Activated CD4-positive, alpha-beta T cell treated with anti-CD3 and anti-CD28 coated beads, Interleukin-2, amount 10 ng/mL, durations not matched to agents 7 days and 5 days (primary cell): ENCODE measurements at regions of chr9 and their contacts with region 1.

Region 1: DNA sequence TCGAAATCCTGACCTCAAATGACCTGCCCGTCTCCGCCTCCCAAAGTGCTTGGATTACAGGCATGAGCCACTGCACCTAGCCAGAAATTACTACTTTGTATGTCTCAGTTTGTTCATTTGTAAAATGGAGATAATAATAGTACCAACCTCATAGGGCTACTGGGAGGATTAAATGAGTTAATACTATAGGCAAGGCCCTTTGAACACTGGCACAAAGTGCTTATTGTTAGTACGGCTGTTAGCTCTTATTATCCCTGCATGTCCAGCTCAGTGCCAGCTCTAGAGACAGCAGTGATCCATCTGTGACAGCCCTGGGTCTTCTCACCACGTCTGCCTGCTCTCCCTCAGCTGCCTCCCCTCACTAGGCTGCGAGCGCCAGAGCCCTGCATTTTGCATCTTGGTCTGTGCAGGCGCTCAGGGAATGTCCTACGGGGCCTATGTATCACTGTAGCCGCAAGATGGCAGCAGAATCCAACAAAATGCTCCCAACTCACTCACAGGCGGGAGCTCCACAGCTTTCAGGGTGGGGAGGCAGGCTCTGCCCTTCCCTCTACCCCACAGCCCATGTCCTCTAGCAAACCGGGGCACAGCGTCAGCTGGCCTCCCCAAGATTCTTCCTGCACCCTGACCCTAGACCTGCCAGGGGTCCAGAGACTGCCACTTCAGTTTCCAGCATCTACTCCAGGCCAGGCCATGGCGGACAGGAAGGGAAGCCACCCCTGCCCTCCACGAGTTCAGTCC is 17.7 kb upstream of the AKNA start:
- DNase-seq: peak; percentile 87
- H3K4me3 Mint-ChIP-seq: no peak overlapping the region
- H3K27ac Mint-ChIP-seq: peak overlapping the region; percentile 70
- H3K4me1 Mint-ChIP-seq: peaks cover 17% of the 10 kb centered on the region
- H3K27me3 Mint-ChIP-seq: no peaks in the 10 kb centered on the region

Region 2: DNA sequence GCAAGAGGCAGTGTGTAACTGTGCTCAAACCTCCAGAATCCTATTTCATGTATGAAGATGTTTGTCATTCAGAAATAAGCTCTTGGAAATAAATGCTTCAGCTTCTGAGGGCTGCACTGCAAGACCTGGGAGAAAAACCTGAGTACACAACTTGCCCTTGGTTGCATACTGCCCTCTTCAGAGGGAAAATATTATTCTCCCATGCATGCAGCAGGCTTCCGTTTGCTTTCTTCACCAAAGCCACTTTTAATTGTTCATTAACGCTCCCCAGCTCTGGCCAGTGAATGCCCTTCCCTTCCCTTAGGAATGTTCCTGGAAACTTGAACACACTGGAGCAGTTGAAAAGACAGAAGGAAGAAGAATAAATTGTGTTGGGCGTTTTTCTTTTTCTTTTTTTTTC is 102.3 kb after region 1 on chr9:
- CTCF ChIA-PET with region 1: interaction called, 11 read pairs
- POLR2A ChIA-PET with region 1: no interaction called
- DNase-seq: peak; percentile 35
- H3K4me3 Mint-ChIP-seq: no peak overlapping the region
- H3K27ac Mint-ChIP-seq: no peak overlapping the region
- H3K4me1 Mint-ChIP-seq: peaks cover 10% of the 10 kb centered on the region
- H3K27me3 Mint-ChIP-seq: peaks cover 65% of the 10 kb centered on the region